ENCODE measurements at regions of chr7 and their contacts with region 1.

Region 1: GRCh38 chr7:68518060-68518459 is 1080.2 kb upstream of the AUTS2 start:
- DNase-seq: no peak
- H3K4me3 ChIP-seq: no peak overlapping the region
- H3K27ac ChIP-seq: no peak overlapping the region
- H3K4me1 ChIP-seq: no peaks in the 10 kb centered on the region
- H3K27me3 ChIP-seq: no peaks in the 10 kb centered on the region
- CTCF ChIP-seq: no peak

Region 2: DNA sequence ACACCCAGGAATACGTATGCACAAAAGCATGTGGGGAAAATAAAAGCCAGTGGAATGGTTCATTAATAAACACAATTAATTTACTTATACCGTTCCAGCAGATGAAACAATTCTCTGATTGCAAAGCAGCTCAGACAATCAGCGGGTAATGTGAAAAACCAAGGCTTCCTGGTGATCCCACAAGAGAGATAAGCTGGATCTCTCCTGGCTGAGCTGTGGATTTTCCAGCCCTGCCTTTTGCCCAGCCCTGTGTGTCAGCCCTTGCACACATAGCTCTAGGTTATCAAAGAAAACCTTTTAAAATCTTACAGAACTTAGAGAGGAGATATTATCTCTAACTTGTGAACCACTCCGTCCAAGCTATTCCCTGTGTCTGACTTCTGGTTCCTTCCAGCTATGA is 69.6 kb after region 1 on chr7:
- CTCF ChIA-PET with region 1: no interaction called
- dilution Hi-C with region 1: loop called (anchors 5 kb)
- in situ Hi-C with region 1: no loop called
- intact Hi-C with region 1: no loop called
- DNase-seq: no peak
- H3K4me3 ChIP-seq: no peak overlapping the region
- H3K27ac ChIP-seq: no peak overlapping the region
- H3K4me1 ChIP-seq: no peaks in the 10 kb centered on the region
- H3K27me3 ChIP-seq: no peaks in the 10 kb centered on the region
- CTCF ChIP-seq: no peak

Region 3: DNA sequence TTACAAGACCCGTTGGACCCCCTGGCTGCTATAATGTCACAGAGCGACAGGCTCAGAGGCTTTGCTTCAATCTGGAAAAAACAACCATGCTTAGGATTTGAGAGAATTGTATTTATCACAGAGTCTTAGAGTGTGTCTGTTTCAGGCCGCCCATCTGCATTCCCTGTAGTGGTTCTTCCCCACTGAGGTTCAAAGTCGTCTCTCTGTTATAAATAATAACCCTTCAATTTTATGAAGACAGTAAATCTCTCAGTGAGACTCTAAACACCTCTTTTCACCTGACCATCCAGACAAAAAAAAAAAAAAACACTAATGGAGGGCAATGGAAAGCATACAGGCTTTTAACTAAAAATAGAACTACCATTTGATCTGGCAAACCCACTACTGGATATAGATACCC is 514.8 kb after region 1 on chr7:
- CTCF ChIA-PET with region 1: no interaction called
- dilution Hi-C with region 1: no loop called
- in situ Hi-C with region 1: no loop called
- intact Hi-C with region 1: no loop called
- DNase-seq: no peak
- H3K4me3 ChIP-seq: no peak overlapping the region
- H3K27ac ChIP-seq: no peak overlapping the region
- H3K4me1 ChIP-seq: no peaks in the 10 kb centered on the region
- H3K27me3 ChIP-seq: no peaks in the 10 kb centered on the region
- CTCF ChIP-seq: no peak